ENCODE measurements at regions of chr6 and their contacts with region 1.

Region 1: DNA sequence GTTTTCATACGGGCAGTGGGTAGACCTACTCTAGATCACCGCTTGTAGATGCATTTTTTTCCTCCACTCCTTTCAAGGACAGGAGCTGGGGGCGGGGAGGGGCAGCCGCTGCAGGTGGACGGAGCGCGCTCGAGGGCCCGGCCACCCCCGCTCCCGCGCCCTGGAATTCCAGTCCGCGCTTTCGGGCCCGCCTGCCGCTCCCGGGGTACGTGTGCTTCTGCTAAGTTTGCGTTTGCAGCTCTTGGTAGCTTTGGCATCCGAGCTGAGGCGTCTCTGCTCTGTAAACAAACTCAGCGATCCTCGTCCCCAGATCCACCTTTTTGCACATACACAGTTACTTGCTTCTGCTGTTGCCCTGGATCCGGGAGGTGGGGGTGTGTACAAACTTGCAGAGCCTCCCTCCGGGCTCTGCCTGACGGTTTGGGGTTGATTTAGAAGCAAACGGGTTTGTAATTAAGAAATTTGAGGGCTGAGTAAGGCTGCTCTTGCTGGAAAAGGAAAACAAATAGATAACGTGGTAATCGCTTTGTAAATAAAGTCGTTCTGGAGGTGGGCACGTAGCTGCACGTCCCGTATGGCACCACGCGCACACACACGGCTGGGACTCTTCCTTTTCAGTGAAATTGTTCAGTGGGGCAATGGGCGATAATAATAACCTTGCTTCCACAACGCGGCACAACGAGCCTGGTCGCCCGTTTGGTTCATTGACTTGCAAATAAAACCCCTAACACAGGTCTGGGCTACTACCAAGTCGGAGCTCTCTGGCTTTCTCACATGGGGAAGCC is 976 bp upstream of the CITED2 start:
- DNase-seq: peak; percentile 96
- ATAC-seq: peak; percentile 79
- H3K4me3 ChIP-seq: peak overlapping the region; percentile 65 to 99 (median 83)
- H3K27ac ChIP-seq: peak overlapping the region; percentile 93
- H3K4me1 ChIP-seq: peaks cover 61% of the 10 kb centered on the region
- H3K27me3 ChIP-seq: peaks cover 0 to 3% of the 10 kb centered on the region in 2 experiments; a peak in 1 of 5 replicates
- CTCF ChIP-seq: peak; percentile 53
- EP300 ChIP-seq: peak; percentile 41 to 71
- POLR2A ChIP-seq: peak; percentile 52 to 71
- RAD21 ChIP-seq: peak; percentile 54; the same call in 1 of the 2 replicates

Region 2: DNA sequence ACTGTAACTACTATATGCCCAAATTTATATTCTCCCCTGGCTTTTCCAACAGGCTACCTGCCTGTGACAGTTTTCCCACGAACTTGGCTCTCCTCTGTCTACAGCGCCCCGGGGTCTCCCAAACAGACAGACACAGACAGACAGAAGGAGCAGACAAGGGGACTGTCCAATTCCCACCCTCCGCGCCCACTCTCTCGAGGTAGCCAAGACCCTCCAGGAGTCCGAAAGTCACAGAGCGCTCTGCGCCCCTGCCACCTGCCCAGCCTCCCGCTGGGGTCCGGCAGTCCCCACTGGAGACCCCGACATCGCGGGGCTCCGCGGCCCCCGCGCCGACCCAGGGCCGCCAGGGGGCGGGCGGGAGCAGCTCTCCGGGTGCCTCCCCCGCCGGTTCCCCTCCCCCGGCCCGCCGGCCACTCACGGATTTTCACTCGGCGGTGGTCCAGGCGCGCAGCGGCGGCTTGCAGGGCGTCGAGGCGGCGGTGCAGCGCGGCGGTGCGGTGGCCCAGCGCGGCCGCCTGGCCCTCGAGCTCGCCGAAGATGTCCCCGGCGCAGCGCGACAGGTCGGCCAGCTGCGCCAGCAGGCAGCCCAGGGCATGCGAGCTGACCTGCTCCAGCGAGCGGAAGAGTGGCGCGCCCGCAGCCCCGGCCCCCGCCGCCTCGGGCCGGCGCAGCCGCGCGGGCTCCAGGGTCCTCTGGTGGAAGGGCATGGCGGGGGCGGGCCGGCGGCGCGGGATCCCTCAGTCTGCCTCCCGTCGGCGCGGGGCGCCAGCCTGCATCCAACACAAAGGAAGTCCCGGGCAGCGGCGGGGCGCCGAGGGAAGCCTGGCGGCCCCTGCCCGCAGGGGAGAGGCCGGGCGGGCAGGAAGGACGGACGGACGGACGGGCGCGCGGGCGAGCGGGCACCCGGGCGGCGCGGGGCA is 683.1 kb before region 1 on chr6:
- CTCF ChIA-PET with region 1: no interaction called
- POLR2A ChIA-PET with region 1: no interaction called
- in situ Hi-C with region 1: loop called (anchors 25 kb)
- intact Hi-C with region 1: no loop called
- DNase-seq: peak; percentile 30
- ATAC-seq: peak; percentile 77
- H3K4me3 ChIP-seq: peak overlapping the region; percentile 87 to 94 (median 90)
- H3K27ac ChIP-seq: peak overlapping the region; percentile 25
- H3K4me1 ChIP-seq: peaks cover 20% of the 10 kb centered on the region
- H3K27me3 ChIP-seq: peaks cover 0 to 13% of the 10 kb centered on the region in 2 experiments; a peak in 1 of 5 replicates
- CTCF ChIP-seq: peak; percentile 80
- EP300 ChIP-seq: 0 out of 4 replicates have a peak, but pooled peaks of 1 of the 2 experiments have one; percentile 15
- POLR2A ChIP-seq: no peak; a peak in 1 of 4 replicates
- RAD21 ChIP-seq: peak; percentile 83

Region 3: DNA sequence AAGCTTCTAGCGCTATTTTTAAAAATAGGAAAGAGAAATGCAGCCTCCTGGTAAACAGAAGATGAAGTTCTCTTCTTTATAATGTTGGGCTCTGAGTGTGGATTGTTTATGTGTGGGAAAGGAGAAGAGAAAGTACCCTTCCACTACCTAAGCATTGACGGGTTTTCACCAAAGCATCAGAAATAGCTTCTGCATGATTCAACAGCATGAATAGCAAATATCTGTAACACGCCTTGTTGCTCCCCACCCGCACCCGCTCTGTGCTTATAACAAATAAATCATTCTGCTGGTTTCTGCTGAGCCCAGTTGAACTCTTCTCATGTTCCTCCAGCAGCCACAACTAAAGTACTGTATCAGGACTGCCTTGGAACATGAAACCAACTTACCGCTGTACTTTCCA is 104.4 kb before region 1 on chr6:
- CTCF ChIA-PET with region 1: no interaction called
- POLR2A ChIA-PET with region 1: no interaction called
- in situ Hi-C with region 1: no loop called
- intact Hi-C with region 1: no loop called
- DNase-seq: no peak
- ATAC-seq: no peak
- H3K4me3 ChIP-seq: no peak overlapping the region
- H3K27ac ChIP-seq: no peak overlapping the region
- H3K4me1 ChIP-seq: no peaks in the 10 kb centered on the region
- H3K27me3 ChIP-seq: no peaks in the 10 kb centered on the region
- CTCF ChIP-seq: no peak
- EP300 ChIP-seq: no peak
- POLR2A ChIP-seq: no peak
- RAD21 ChIP-seq: no peak

Region 4: DNA sequence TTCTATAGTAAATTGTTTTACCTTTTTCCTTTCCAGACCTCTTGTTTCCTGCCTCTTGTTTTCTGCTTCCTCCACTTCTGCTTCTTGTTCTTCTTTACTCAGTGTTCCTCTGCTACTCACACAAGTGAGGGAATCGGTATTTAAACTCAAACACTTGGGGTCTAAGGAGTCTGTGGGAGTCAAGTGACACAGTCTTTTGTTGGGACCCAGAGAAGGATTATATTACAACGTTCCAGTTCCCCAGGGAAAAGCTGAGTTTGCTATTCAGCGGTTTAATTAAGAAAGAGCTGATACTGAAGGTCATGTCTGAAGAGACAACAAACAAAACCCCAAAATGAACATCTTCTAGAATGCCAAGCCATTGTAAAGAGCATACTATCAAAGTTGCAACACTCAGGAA is 106.9 kb after region 1 on chr6:
- CTCF ChIA-PET with region 1: no interaction called
- POLR2A ChIA-PET with region 1: interaction called, 34 read pairs
- in situ Hi-C with region 1: no loop called
- intact Hi-C with region 1: loop called (anchors 1 kb)
- DNase-seq: no peak
- ATAC-seq: no peak
- H3K4me3 ChIP-seq: no peak overlapping the region
- H3K27ac ChIP-seq: no peak overlapping the region
- H3K4me1 ChIP-seq: peaks cover 60% of the 10 kb centered on the region
- H3K27me3 ChIP-seq: no peaks in the 10 kb centered on the region
- CTCF ChIP-seq: no peak
- EP300 ChIP-seq: no peak
- POLR2A ChIP-seq: no peak
- RAD21 ChIP-seq: no peak

Region 5: GRCh38 chr6:139540276-139540675 is 164.9 kb after region 1 on chr6:
- CTCF ChIA-PET with region 1: no interaction called
- POLR2A ChIA-PET with region 1: interaction called, 10 read pairs
- in situ Hi-C with region 1: no loop called
- intact Hi-C with region 1: loop called (anchors 2 kb)
- DNase-seq: no peak
- ATAC-seq: peak; percentile 37; the same call in 2 of the 3 replicates
- H3K4me3 ChIP-seq: peak overlapping the region in 2 of 3 experiments; percentile 8; a peak in 1 of 6 replicates
- H3K27ac ChIP-seq: no peak overlapping the region
- H3K4me1 ChIP-seq: peaks cover 41% of the 10 kb centered on the region
- H3K27me3 ChIP-seq: no peaks in the 10 kb centered on the region
- CTCF ChIP-seq: no peak
- EP300 ChIP-seq: no peak
- POLR2A ChIP-seq: no peak
- RAD21 ChIP-seq: no peak

Region 6: DNA sequence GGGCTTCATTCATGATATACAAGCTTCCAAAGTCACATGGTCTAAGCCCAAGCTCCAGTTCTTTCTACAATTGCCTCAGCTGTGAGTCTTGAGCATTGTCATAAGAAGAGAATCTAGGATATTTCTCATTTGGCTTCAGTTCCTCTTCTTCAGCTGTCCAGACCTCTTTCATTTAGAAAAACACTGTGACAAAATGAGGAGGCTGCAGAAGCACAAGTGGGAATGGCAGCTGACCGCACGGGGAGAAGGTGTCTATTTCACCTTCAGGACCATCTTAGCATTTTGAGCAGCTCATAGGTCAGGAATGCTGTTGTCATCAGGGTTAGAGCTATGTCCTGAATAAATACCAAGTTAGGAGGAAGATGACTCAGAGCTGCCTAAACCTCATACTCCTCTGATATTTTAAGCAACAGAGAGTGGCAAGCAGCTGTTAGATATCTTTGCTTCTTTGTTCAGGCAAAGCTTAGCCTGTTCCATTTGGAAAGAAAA is 389.1 kb after region 1 on chr6:
- CTCF ChIA-PET with region 1: no interaction called
- POLR2A ChIA-PET with region 1: interaction called, 8 read pairs
- in situ Hi-C with region 1: loop called (anchors 10 kb)
- intact Hi-C with region 1: loop called (anchors 2 kb)
- DNase-seq: peak; percentile 66
- ATAC-seq: peak; percentile 84
- H3K4me3 ChIP-seq: no peak overlapping the region
- H3K27ac ChIP-seq: no peak overlapping the region
- H3K4me1 ChIP-seq: peaks cover 18% of the 10 kb centered on the region
- H3K27me3 ChIP-seq: no peaks in the 10 kb centered on the region
- CTCF ChIP-seq: no peak
- EP300 ChIP-seq: no peak
- POLR2A ChIP-seq: no peak
- RAD21 ChIP-seq: no peak

Region 7: GRCh38 chr6:140380427-140381218 is 1005.2 kb after region 1 on chr6:
- CTCF ChIA-PET with region 1: no interaction called
- POLR2A ChIA-PET with region 1: interaction called, 14 read pairs
- in situ Hi-C with region 1: no loop called
- intact Hi-C with region 1: loop called (anchors 2 kb)
- DNase-seq: peak; percentile 88
- ATAC-seq: peak; percentile 95
- H3K4me3 ChIP-seq: peak overlapping the region in 1 of 3 experiments; percentile 20; a peak in 1 of 6 replicates
- H3K27ac ChIP-seq: peak overlapping the region; percentile 61
- H3K4me1 ChIP-seq: peaks cover 42% of the 10 kb centered on the region
- H3K27me3 ChIP-seq: no peaks in the 10 kb centered on the region
- CTCF ChIP-seq: no peak
- EP300 ChIP-seq: peak in 1 of 2 experiments; percentile 97; a peak in 2 of 4 replicates
- POLR2A ChIP-seq: no peak
- RAD21 ChIP-seq: no peak

Region 8: GRCh38 chr6:140921366-140922226 is 1546.2 kb after region 1 on chr6:
- CTCF ChIA-PET with region 1: no interaction called
- POLR2A ChIA-PET with region 1: interaction called, 3 read pairs
- in situ Hi-C with region 1: loop called (anchors 25 kb)
- intact Hi-C with region 1: no loop called
- DNase-seq: peak; percentile 61
- ATAC-seq: peak; percentile 97
- H3K4me3 ChIP-seq: no peak overlapping the region
- H3K27ac ChIP-seq: no peak overlapping the region
- H3K4me1 ChIP-seq: no peaks in the 10 kb centered on the region
- H3K27me3 ChIP-seq: no peaks in the 10 kb centered on the region
- CTCF ChIP-seq: peak; percentile 80
- EP300 ChIP-seq: no peak
- POLR2A ChIP-seq: no peak
- RAD21 ChIP-seq: peak; percentile 67

Measured in HepG2 (cell line).